Common myeloid progenitor, CD34-positive (primary cell): ENCODE measurements at regions of chr9 and their contacts with region 1.

Region 1: DNA sequence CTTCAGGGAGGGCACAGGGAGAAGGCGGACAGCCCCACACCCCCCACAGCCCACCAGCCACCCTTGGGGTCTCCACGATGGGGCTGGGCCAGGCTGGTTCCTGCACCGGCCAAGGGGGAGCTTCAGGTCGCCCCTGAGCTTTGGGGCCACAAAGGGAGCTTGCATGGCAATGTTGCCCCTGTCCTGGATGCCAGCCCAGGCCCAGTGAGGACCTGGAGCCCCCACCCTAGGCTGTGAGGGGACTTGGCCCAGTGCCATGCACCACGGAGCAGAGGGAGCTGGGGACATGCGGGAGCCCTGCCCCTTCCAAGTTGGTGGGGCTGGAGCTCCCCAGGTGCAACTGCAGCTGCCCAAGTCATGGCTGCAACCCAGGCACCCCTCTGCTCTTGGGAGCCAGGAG is 18.4 kb downstream of the TMEM38B start:
- DNase-seq: no peak
- H3K4me3 ChIP-seq: no peak overlapping the region
- H3K27ac ChIP-seq: no peak overlapping the region
- H3K4me1 ChIP-seq: peaks cover 0 to 3% (median 0%) of the 10 kb centered on the region in 4 experiments
- H3K27me3 ChIP-seq: no peaks in the 10 kb centered on the region

Region 2: DNA sequence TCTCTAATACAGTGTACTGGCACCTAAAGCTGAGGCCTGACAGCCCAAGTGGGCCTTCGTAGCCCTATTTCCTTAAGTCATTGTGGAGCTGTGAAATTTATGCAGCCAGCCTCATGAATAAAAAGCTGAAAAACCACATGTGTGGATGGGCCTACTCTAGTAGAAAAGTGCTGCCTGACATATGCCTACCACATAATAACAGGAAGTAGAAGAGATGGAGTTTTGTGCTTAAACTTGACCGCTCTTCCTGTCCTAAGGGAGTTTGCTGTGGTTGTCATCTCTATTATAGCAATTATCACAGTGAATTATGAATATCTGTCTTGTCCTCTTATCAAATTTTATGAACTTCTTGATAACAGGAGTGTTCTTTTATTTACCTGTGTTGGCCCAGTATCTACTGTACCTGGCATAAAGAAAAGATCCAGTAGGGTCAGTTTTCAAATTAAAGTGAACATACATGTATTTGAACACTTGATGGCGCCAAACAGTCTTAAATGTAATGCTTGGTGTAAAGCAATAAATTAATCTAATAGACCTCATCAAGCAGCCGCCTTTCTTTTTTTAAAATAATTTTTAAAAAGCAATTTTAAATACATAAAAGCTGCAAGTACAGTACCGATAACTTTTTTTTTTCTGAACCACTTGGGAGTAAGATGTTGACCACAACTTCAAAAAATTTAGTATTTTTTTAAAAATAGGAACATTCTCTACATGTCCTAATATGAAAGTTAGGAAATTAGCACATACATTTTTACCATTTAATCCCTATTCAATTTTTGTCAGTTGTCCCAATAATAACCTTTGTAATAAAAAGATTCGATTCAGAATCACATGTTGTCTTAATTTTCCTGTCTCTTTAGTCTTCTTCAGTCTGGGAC is 103.8 kb before region 1 on chr9:
- CTCF ChIA-PET with region 1: interaction called, 13 read pairs
- POLR2A ChIA-PET with region 1: no interaction called
- DNase-seq: peak; percentile 62 to 80 (median 79)
- H3K4me3 ChIP-seq: no peak overlapping the region
- H3K27ac ChIP-seq: no peak overlapping the region
- H3K4me1 ChIP-seq: no peaks in the 10 kb centered on the region
- H3K27me3 ChIP-seq: no peaks in the 10 kb centered on the region

Region 3: GRCh38 chr9:105636331-105636730 is 76.4 kb before region 1 on chr9:
- CTCF ChIA-PET with region 1: interaction called, 10 read pairs
- POLR2A ChIA-PET with region 1: no interaction called
- DNase-seq: no peak
- H3K4me3 ChIP-seq: no peak overlapping the region
- H3K27ac ChIP-seq: no peak overlapping the region
- H3K4me1 ChIP-seq: no peaks in the 10 kb centered on the region
- H3K27me3 ChIP-seq: no peaks in the 10 kb centered on the region

Region 4: GRCh38 chr9:105656131-105656921 is 56.4 kb before region 1 on chr9:
- CTCF ChIA-PET with region 1: interaction called, 12 read pairs
- POLR2A ChIA-PET with region 1: interaction called, 3 read pairs
- DNase-seq: peak; percentile 17 to 56 (median 35)
- H3K4me3 ChIP-seq: peak overlapping the region; percentile 28 to 83 (median 67)
- H3K27ac ChIP-seq: no peak overlapping the region
- H3K4me1 ChIP-seq: peaks cover 2 to 16% (median 13%) of the 10 kb centered on the region in 4 experiments
- H3K27me3 ChIP-seq: peaks cover 0 to 12% (median 4%) of the 10 kb centered on the region in 5 experiments

Region 5: DNA sequence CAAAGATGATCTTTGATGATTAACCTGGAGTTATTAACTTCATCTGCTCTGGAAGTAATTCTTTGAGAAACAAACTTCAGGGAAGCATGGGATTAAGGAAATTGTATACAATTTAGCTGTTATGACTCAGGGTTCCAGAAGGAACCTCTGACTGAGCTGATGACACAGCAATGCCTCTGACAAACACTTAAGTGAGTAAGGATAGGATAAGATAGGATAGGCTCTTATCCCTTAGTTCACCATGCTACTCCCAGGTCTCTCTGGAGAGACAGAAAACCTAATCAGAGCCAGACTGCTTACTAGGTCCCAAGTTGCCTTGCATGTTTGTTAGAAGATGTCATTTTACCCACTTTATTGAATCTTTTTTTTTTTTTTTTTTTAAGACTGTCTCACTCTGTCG is 31.0 kb before region 1 on chr9:
- CTCF ChIA-PET with region 1: no interaction called
- POLR2A ChIA-PET with region 1: no interaction called
- DNase-seq: no peak
- H3K4me3 ChIP-seq: no peak overlapping the region
- H3K27ac ChIP-seq: no peak overlapping the region
- H3K4me1 ChIP-seq: no peaks in the 10 kb centered on the region
- H3K27me3 ChIP-seq: no peaks in the 10 kb centered on the region

Region 6: GRCh38 chr9:105700668-105701067 is 12.1 kb before region 1 on chr9:
- CTCF ChIA-PET with region 1: interaction called, 15 read pairs
- POLR2A ChIA-PET with region 1: interaction called, 3 read pairs
- DNase-seq: peak in 2 of 3 donors; percentile 77 to 87
- H3K4me3 ChIP-seq: peak overlapping the region in 3 of 7 experiments; percentile 16 to 48 (median 36)
- H3K27ac ChIP-seq: peak overlapping the region in 1 of 2 experiments; percentile 71
- H3K4me1 ChIP-seq: peaks cover 6 to 44% (median 26%) of the 10 kb centered on the region in 4 experiments
- H3K27me3 ChIP-seq: no peaks in the 10 kb centered on the region

Region 7: DNA sequence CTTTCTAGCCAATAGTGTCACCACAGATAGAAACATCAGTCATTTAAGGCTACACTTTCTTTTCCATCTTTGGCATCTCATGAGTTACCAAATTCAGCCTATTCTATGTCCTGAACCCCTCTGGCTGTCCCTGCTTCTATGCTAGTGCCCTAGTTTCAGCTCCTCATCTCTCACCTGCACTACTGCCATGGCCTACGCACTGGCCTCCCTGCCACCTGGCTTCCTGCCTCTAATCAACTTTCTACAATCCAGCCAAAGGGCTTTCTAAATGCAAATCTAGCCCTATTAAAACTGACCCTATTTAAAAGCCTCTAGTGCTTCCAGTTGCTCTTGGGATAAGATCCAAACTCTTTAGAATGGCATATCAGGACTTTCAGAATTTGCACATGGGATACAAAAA is 464.4 kb after region 1 on chr9:
- CTCF ChIA-PET with region 1: no interaction called
- POLR2A ChIA-PET with region 1: no interaction called
- DNase-seq: no peak
- H3K4me3 ChIP-seq: no peak overlapping the region
- H3K27ac ChIP-seq: no peak overlapping the region
- H3K4me1 ChIP-seq: no peaks in the 10 kb centered on the region
- H3K27me3 ChIP-seq: no peaks in the 10 kb centered on the region